HCT116 (cell line): ENCODE measurements at regions of chr13 and their contacts with region 1.

Region 1: DNA sequence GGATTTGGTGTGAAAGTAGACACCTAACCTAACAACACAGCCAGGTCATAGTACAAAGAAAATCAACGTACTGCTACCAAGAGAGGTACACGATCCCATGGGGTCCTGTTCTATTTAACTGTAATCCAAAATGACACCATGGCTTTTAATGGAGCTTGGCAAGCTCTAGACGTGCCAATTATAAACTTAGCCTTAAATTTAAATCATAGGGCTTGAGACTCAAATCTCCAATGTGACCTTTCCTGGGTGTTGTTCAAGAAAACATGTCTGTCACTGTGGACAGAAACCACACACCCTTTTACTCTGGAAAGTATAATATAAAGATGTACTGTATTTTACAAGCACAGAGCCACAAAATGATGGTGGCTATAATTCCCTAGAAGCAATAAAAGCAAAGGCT is 299.3 kb downstream of the ENOX1 start:
- DNase-seq: no peak
- ATAC-seq: no peak
- H3K4me3 ChIP-seq: no peak overlapping the region
- H3K27ac ChIP-seq: no peak overlapping the region
- H3K4me1 ChIP-seq: no peaks in the 10 kb centered on the region
- H3K27me3 ChIP-seq: no peaks in the 10 kb centered on the region
- CTCF ChIP-seq: no peak
- POLR2A ChIP-seq: no peak
- RAD21 ChIP-seq: no peak

Region 2: GRCh38 chr13:43159026-43159461 is 328.4 kb before region 1 on chr13:
- CTCF ChIA-PET with region 1: no interaction called
- POLR2A ChIA-PET with region 1: no interaction called
- RAD21 ChIA-PET with region 1: no interaction called
- intact Hi-C with region 1: no loop called
- DNase-seq: no peak
- ATAC-seq: 0 out of 2 replicates have a peak, but pooled peaks have one; percentile 44
- H3K4me3 ChIP-seq: no peak overlapping the region
- H3K27ac ChIP-seq: no peak overlapping the region
- H3K4me1 ChIP-seq: peaks cover 3 to 6% of the 10 kb centered on the region in 2 experiments; a peak in 3 of 4 replicates
- H3K27me3 ChIP-seq: no peaks in the 10 kb centered on the region
- CTCF ChIP-seq: peak in 1 of 3 experiments; percentile 12; a peak in 1 of 6 replicates
- POLR2A ChIP-seq: no peak
- RAD21 ChIP-seq: peak; percentile 8; the same call in 1 of the 2 replicates

Region 3: GRCh38 chr13:43516401-43516833 is 29.0 kb after region 1 on chr13:
- CTCF ChIA-PET with region 1: no interaction called
- POLR2A ChIA-PET with region 1: no interaction called
- RAD21 ChIA-PET with region 1: no interaction called
- intact Hi-C with region 1: loop called (anchors 1 kb)
- DNase-seq: no peak
- ATAC-seq: no peak
- H3K4me3 ChIP-seq: no peak overlapping the region
- H3K27ac ChIP-seq: no peak overlapping the region
- H3K4me1 ChIP-seq: no peaks in the 10 kb centered on the region
- H3K27me3 ChIP-seq: no peaks in the 10 kb centered on the region
- CTCF ChIP-seq: no peak
- POLR2A ChIP-seq: no peak
- RAD21 ChIP-seq: no peak